AG04449 (cell line): ENCODE measurements at regions of chr15 and their contacts with region 1.

Region 1: GRCh38 chr15:99347574-99347973 is 96.3 kb downstream of the LRRC28 start:
- DNase-seq: no peak
- H3K4me3 ChIP-seq: no peak overlapping the region
- CTCF ChIP-seq: no peak

Region 2: GRCh38 chr15:99361541-99362185 is 14.1 kb after region 1 on chr15:
- CTCF ChIA-PET with region 1: interaction called, 13 read pairs
- POLR2A ChIA-PET with region 1: no interaction called
- DNase-seq: no peak
- H3K4me3 ChIP-seq: no peak overlapping the region
- CTCF ChIP-seq: peak; percentile 16